GM10248 (cell line): ENCODE measurements at regions of chr1 and their contacts with region 1.

Region 1: DNA sequence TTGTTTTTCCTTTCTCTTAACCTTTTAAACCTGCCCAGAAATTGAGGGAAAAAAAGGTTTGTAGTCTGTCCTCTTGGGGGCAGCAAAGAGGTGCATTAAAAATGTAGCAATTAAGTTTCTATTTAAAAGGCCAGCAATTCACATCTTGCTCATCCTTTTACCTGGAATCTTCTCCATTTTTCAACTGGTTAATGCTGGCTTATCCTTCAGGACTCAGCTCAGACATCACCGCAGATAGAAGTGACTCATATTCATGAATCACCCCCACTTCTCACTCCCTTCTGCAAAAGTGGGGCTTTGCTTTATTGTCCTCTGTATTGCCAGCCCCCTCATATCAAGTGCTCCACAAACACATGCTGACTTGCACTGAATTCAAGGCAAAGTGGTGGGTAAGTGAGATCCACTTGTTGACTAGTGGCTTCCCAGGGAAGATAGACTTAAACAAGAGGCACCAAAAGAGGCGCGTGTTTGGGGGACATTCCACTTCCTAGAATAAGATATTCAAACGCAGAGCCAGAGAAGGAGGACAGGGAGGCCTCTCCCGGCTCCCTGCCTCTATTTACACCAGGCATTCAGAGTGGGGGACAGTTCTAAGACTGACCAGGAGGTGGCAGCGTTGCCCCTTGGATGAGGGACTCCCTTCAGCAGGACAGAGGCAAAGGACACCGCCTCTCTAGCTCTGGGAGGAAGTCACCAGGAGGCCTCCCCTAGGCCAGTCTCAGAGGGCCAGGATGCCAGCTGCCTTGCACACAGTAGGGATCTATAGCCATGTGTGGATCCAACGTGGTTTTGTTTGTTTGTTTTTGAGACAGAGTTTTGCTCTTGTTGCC is 23.2 kb upstream of the ZNF648 start:
- DNase-seq: peak; percentile 85
- CTCF ChIP-seq: peak; percentile 86

Region 2: DNA sequence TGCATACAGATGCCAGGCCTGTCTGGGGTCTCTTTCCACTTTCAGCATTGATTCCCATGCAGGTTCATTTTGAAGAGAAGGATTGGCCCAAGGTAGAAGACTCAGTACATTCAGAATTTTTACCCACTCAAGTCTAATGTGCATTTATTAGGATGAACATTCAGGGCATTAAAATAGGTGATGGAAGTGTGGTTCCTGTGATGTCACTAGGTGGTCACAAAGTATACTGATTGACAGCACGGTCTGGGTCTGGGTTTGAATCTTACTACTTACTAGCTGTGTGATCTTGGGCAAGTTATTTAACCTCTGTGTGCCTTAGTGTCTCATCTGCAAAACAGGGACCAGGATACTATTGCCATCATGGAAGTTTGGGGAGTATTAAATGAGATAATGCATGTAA is 22.5 kb before region 1 on chr1:
- CTCF ChIA-PET with region 1: interaction called, 90 read pairs
- POLR2A ChIA-PET with region 1: no interaction called
- DNase-seq: no peak
- CTCF ChIP-seq: no peak

Region 3: DNA sequence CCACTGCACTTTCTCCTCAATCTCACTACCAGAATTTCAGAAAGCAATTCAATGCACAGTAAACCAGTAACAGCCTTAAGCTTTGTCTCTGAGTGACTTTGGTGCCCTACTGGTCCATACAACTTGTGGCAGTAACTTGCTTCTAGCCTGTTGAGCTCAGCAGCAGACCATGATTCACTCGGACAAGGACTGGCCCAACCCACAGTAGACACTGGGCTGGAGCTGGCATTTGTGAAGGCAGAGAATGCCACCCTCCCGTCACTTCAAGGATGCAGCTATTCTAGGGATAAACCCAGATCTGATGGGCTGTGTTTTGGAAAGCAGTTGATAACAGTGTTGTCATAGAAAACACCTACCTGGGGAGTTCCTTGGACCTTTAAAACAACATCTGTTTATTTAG is 12.8 kb after region 1 on chr1:
- CTCF ChIA-PET with region 1: interaction called, 13 read pairs
- POLR2A ChIA-PET with region 1: no interaction called
- DNase-seq: no peak
- CTCF ChIP-seq: no peak

Region 4: GRCh38 chr1:182159443-182159842 is 74.7 kb after region 1 on chr1:
- CTCF ChIA-PET with region 1: no interaction called
- POLR2A ChIA-PET with region 1: no interaction called
- DNase-seq: no peak
- CTCF ChIP-seq: no peak

Region 5: GRCh38 chr1:182391362-182392044 is 306.8 kb after region 1 on chr1 and contains the start of gene GLUL:
- CTCF ChIA-PET with region 1: interaction called, 71 read pairs
- POLR2A ChIA-PET with region 1: no interaction called
- DNase-seq: peak; percentile 91
- CTCF ChIP-seq: no peak

Region 6: GRCh38 chr1:182595641-182596240 is 511.0 kb after region 1 on chr1:
- CTCF ChIA-PET with region 1: interaction called, 13 read pairs
- POLR2A ChIA-PET with region 1: no interaction called
- DNase-seq: peak; percentile 70
- CTCF ChIP-seq: peak; percentile 95